ENCODE measurements at regions of chr16 and their contacts with region 1.

Region 1: DNA sequence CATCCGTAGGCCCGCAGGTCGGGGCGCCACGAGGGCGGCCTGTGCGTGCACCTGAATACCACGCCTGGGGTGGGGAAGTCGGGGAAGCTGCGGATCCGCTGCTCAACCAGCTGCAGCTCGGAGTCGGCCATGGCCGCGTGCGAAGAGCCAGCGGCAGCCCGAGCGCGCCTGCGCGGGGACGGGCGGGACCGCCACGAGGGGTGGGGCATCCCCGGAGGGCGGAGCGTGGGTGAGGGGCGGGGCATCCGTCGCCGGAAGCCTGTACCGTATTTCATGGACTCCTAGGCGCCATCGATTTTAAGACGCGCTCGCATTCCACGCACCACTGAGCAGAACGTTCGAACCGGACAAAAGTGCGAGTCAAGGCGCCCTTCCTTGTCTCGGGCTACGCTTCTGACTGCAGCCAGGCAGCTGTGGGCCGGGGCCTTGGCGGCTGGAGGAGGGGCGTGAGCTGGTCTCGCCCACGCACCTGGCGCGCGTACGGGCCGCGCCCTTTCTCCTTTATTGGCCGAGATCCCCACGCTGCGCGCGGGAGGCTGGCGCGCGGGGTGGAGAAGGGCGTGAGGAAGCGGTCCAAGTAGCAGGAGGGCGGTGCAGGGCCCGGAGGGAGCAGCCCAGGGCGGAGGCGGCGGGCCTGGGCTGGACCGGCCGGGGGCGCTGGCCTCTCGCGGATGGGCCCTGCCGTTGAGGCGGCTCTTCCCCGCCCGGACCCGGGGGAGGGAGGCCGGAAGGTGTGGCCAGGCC is at the start of gene APRT:
- DNase-seq: peak; percentile 93 to 98
- H3K4me3 ChIP-seq: peak within 1 kb of the TSS; percentile 71 to 89 (median 88)
- H3K27ac ChIP-seq: peak within 1 kb of the TSS; percentile 85 to 92
- H3K4me1 ChIP-seq: peaks cover 14% of the 10 kb centered on the region in 2 donors
- H3K27me3 ChIP-seq: no peaks in the 10 kb centered on the region
- CTCF ChIP-seq: peak in 2 of 3 donors; percentile 12 to 29
- POLR2A ChIP-seq: no peak
- total RNA-seq, gene APRT: 93.8 to 152 (median 126) TPM

Region 2: DNA sequence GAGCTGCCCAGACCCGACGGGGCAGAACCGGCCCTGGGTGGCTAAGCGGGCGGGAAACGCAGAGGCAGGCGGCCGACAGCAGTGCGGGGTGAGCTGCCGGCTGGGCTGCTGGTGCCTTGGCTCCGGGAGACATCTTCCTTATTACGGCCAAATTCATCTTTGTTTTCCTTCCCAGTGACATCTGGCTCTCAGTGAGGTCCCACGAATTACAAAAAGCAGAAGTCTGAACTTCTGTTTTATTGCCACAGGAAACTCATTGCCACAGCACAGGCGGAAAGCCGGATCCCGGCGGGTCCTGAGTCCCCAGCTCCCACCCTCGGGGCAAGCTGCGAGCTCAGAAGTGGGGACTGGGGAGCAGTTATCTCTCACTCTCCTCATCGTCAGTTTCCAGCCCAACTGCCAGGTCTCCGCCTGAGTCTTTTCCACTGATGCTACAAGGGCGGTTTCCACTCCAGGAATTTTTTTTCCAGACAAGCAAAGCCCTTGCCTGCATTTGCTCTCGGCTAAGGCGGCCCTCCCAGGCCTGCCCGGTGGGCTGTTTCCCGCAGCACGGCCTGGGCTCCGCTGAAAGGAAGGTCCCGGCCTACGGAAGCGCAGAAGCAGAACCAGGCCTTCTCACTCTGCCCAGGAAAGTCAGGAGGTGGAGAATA is 124.7 kb after region 1 on chr16:
- intact Hi-C with region 1: no loop called
- DNase-seq: no peak
- H3K4me3 ChIP-seq: peak overlapping the region in 1 of 3 donors; percentile 33
- H3K27ac ChIP-seq: peak overlapping the region in 1 of 2 donors; percentile 73
- H3K4me1 ChIP-seq: peaks cover 0 to 13% of the 10 kb centered on the region in 2 donors
- H3K27me3 ChIP-seq: peaks cover 2 to 28% of the 10 kb centered on the region in 2 donors
- CTCF ChIP-seq: no peak
- POLR2A ChIP-seq: no peak

Region 3: GRCh38 chr16:89067677-89068406 is 255.9 kb after region 1 on chr16:
- intact Hi-C with region 1: no loop called
- DNase-seq: no peak
- H3K4me3 ChIP-seq: no peak overlapping the region
- H3K27ac ChIP-seq: no peak overlapping the region
- H3K4me1 ChIP-seq: no peaks in the 10 kb centered on the region
- H3K27me3 ChIP-seq: peaks cover 0 to 58% of the 10 kb centered on the region in 2 donors
- CTCF ChIP-seq: no peak
- POLR2A ChIP-seq: no peak

Region 4: GRCh38 chr16:89135971-89136765 is 324.2 kb after region 1 on chr16:
- intact Hi-C with region 1: no loop called
- DNase-seq: no peak
- H3K4me3 ChIP-seq: no peak overlapping the region
- H3K27ac ChIP-seq: no peak overlapping the region
- H3K4me1 ChIP-seq: no peaks in the 10 kb centered on the region
- H3K27me3 ChIP-seq: no peaks in the 10 kb centered on the region
- CTCF ChIP-seq: no peak
- POLR2A ChIP-seq: no peak

Region 5: GRCh38 chr16:89224665-89225064 is 412.7 kb after region 1 on chr16:
- intact Hi-C with region 1: loop called (anchors 1 kb)
- DNase-seq: no peak
- H3K4me3 ChIP-seq: no peak overlapping the region
- H3K27ac ChIP-seq: no peak overlapping the region
- H3K4me1 ChIP-seq: no peaks in the 10 kb centered on the region
- H3K27me3 ChIP-seq: no peaks in the 10 kb centered on the region
- CTCF ChIP-seq: no peak
- POLR2A ChIP-seq: no peak

Measured in breast epithelium (tissue), 4 donors.